A549 (cell line): ENCODE measurements at regions of chr7 and their contacts with region 1.

Region 1: DNA sequence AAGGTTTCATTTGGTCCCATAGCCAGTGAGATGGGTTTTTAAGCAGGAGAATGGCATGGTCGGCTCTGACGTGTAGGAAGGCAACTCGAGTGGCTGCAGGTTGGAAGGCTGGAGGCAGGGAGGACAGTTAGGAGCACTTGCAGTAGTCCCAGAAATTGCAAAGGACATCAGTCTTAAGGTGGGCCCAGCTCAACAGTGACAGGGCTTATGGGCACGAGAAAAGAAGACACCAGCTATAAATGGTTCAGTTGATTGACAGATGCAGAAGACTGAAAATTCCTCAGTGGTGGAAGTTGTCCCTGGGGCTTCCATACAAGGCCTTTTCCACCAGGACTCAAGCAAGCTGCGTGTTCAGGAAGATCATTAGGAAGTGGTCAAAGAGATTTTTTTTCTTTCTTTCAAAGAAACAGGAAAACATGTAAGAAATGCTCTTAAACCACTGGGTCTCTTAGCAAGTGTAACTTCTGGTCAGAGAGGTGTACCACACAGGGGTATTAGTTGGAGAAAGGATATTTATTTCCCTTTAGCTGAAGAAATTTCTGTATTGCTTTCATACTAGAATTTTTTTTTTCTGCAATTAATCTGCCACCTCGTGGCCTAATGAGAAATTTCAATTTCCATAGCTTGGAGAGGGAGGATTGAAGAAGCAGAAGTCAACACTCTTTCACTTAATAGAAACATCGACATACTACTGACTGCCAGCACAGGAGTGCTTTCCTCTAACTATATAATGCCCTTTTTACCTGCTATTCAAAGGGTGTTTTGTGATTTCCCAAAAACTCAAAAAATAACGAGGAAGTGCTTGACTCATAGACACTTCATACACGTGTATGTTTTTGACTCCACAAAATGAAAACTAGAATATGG is 177.4 kb upstream of the NAMPT start:
- DNase-seq: peak in 1 of 2 experiments; percentile 50
- ATAC-seq: peak; percentile 62 to 81
- H3K4me3 ChIP-seq: no peak overlapping the region
- H3K27ac ChIP-seq: peak overlapping the region; percentile 62 to 67
- H3K4me1 ChIP-seq: peaks cover 12% of the 10 kb centered on the region; the same call in 1 of the 3 replicates
- CTCF ChIP-seq: peak; percentile 80
- EP300 ChIP-seq: no peak
- POLR2A ChIP-seq: no peak
- RAD21 ChIP-seq: peak; percentile 78 to 89

Region 2: DNA sequence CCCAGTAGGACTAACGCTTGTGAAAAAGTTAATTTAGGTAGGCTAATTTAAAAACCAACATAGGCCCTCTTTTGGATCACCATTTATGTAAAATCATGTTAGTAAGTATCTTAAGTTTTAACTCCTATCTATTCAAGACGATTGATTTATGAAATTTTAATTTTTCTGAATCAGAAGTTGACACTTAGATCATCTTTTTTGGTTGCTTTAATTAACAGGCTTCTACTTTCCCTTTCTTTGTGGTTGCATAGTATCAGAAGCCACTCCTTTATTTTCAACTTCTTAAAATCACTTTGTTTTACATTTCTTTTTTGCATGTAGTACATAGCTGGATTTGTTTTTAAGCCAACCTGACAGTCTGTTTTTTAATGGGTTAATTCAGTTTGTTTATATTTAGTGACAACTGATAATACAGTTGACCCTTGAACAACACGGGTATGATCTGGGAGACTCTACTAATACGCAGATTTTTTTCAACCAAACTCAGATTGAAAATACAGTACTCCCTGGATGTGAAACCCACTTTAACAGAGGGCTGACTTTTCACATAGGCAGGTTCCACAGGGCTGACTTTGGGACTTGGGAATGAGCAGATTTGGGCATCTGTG is 280.5 kb before region 1 on chr7:
- CTCF ChIA-PET with region 1: interaction called, 289 read pairs
- POLR2A ChIA-PET with region 1: interaction called, 10 read pairs
- DNase-seq: no peak
- ATAC-seq: no peak
- H3K4me3 ChIP-seq: no peak overlapping the region
- H3K27ac ChIP-seq: no peak overlapping the region
- H3K4me1 ChIP-seq: peaks cover 19% of the 10 kb centered on the region
- CTCF ChIP-seq: no peak
- EP300 ChIP-seq: no peak
- POLR2A ChIP-seq: no peak
- RAD21 ChIP-seq: no peak

Region 3: GRCh38 chr7:106377847-106378361 is 84.3 kb before region 1 on chr7:
- CTCF ChIA-PET with region 1: interaction called, 10 read pairs
- POLR2A ChIA-PET with region 1: interaction called, 4 read pairs
- DNase-seq: peak; percentile 36 to 95
- ATAC-seq: peak; percentile 92 to 96
- H3K4me3 ChIP-seq: 0 out of 3 replicates have a peak overlapping the region, but pooled peaks have one; percentile 6
- H3K27ac ChIP-seq: peak overlapping the region; percentile 74 to 80
- H3K4me1 ChIP-seq: peaks cover 29% of the 10 kb centered on the region
- CTCF ChIP-seq: no peak
- EP300 ChIP-seq: peak; percentile 84 to 93; a peak in 4 of 5 replicates
- POLR2A ChIP-seq: no peak
- RAD21 ChIP-seq: peak in 1 of 2 experiments; percentile 34; a peak in 2 of 5 replicates

Region 4: DNA sequence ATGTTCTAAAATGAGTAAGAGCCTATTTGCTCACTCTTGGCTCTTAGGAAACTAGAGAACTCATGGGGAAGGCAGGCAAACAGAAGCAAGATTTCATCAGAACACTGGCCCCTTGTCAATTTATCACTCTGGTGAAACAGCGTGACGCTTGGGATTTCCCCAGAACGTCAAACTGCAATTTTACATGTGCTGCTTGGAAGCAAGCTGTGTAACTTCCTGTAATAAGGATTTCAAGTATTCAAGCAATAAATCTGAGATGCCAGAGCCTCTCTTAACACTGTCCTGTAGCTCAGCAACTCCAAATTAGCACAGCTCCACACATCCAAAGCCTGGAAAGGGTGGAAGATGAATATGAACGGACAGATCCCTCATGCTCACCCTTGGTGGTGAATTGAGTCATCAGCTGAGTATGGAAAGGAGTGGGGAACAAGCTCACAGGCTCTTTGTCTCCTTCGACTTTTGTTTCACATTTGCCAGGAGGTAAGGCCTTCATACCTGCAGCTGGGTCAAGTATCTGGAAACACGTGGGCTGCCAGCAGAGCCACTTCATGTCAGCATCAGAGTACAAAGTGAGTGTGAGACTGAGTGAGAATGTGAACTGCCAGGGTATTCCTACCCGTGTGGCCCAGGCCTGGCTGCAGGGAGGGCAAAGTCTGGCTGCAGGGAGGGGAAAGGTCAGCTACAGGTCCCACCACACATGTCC is 37.1 kb before region 1 on chr7:
- CTCF ChIA-PET with region 1: interaction called, 10 read pairs
- POLR2A ChIA-PET with region 1: interaction called, 3 read pairs
- DNase-seq: peak; percentile 57 to 91
- ATAC-seq: peak; percentile 82 to 86
- H3K4me3 ChIP-seq: no peak overlapping the region
- H3K27ac ChIP-seq: peak overlapping the region; percentile 82 to 90
- H3K4me1 ChIP-seq: peaks cover 39% of the 10 kb centered on the region
- CTCF ChIP-seq: no peak
- EP300 ChIP-seq: peak; percentile 87 to 93; a peak in 4 of 5 replicates
- POLR2A ChIP-seq: no peak
- RAD21 ChIP-seq: peak; percentile 2 to 42; a peak in 3 of 5 replicates

Region 5: GRCh38 chr7:106448992-106449859 is 13.0 kb before region 1 on chr7:
- CTCF ChIA-PET with region 1: interaction called, 39 read pairs
- POLR2A ChIA-PET with region 1: no interaction called
- DNase-seq: peak in 1 of 2 experiments; percentile 91
- ATAC-seq: peak; percentile 80 to 93
- H3K4me3 ChIP-seq: no peak overlapping the region
- H3K27ac ChIP-seq: peak overlapping the region; percentile 85 to 90
- H3K4me1 ChIP-seq: peaks cover 30% of the 10 kb centered on the region
- CTCF ChIP-seq: no peak
- EP300 ChIP-seq: peak in 1 of 2 experiments; percentile 15; a peak in 1 of 5 replicates
- POLR2A ChIP-seq: no peak
- RAD21 ChIP-seq: no peak

Region 6: DNA sequence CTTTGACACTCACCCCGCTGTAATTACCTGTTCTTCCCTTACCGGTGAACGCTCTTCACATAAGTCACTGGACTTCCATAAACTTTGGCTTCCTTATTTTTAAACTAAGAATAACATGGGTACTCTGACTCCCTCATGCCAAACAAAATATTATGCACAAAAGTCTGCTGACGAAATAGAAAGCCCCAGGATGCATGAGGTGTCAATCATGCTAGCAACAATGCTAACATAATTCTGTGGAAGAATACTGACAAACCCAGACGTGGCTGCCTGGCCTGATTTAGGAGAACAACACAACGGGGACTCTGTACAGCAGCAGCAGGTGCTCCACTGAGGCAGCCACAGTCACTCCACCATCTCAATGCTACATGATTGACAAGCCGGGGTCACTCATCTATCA is 61.3 kb after region 1 on chr7:
- CTCF ChIA-PET with region 1: no interaction called
- POLR2A ChIA-PET with region 1: no interaction called
- DNase-seq: no peak
- ATAC-seq: no peak
- H3K4me3 ChIP-seq: no peak overlapping the region
- H3K27ac ChIP-seq: no peak overlapping the region
- H3K4me1 ChIP-seq: no peaks in the 10 kb centered on the region
- CTCF ChIP-seq: no peak
- EP300 ChIP-seq: no peak
- POLR2A ChIP-seq: no peak
- RAD21 ChIP-seq: no peak